Activated naive CD4-positive, alpha-beta T cell treated with anti-CD3 and anti-CD28 coated beads for 36 hours (primary cell): ENCODE measurements at regions of chr17 and their contacts with region 1.

Region 1: GRCh38 chr17:39636927-39637736 is at the start of gene STARD3:
- DNase-seq: peak; percentile 94
- H3K4me3 Mint-ChIP-seq: peak within 1 kb of the TSS; percentile 92
- H3K27ac Mint-ChIP-seq: peak within 1 kb of the TSS; percentile 93
- H3K4me1 Mint-ChIP-seq: peaks cover 49% of the 10 kb centered on the region
- H3K27me3 Mint-ChIP-seq: no peaks in the 10 kb centered on the region
- total RNA-seq, gene STARD3: 56.1 to 56.8 TPM

Region 2: DNA sequence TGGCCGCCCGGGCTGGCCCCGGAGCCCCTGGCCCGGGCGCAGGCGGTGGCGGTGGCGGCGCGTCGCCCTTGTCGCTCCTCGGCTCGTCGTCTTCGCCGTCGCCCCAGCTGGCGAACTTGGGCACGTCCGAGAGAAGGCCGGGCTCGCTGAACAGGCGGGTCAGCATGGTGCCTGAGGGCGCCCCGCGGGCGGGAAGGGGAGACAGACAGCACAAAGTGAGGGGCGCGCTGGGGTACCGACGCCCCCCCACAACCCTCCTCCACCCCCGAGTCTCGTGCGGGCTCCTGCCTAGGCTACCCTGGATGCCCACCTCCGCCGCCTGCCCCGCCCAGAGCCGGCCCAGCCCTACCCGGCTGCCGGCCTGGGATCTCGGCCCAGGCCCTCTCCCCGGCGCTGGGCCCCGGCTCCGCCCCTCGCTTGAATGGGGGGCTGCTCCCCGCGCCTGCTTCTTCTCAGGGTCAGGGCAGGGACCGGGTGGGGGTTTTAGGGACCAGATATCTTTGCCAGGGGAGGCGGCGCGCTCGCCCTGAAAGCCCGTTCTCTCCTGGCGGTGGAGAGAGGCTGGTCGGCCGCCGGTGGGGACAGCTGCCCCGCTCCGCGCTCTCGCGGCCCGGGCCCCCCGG is 30.6 kb before region 1 on chr17:
- CTCF ChIA-PET with region 1: no interaction called
- intact Hi-C with region 1: no loop called
- DNase-seq: no peak
- H3K4me3 Mint-ChIP-seq: no peak overlapping the region
- H3K27ac Mint-ChIP-seq: no peak overlapping the region
- H3K4me1 Mint-ChIP-seq: peaks cover 19% of the 10 kb centered on the region
- H3K27me3 Mint-ChIP-seq: peaks cover 61% of the 10 kb centered on the region

Region 3: DNA sequence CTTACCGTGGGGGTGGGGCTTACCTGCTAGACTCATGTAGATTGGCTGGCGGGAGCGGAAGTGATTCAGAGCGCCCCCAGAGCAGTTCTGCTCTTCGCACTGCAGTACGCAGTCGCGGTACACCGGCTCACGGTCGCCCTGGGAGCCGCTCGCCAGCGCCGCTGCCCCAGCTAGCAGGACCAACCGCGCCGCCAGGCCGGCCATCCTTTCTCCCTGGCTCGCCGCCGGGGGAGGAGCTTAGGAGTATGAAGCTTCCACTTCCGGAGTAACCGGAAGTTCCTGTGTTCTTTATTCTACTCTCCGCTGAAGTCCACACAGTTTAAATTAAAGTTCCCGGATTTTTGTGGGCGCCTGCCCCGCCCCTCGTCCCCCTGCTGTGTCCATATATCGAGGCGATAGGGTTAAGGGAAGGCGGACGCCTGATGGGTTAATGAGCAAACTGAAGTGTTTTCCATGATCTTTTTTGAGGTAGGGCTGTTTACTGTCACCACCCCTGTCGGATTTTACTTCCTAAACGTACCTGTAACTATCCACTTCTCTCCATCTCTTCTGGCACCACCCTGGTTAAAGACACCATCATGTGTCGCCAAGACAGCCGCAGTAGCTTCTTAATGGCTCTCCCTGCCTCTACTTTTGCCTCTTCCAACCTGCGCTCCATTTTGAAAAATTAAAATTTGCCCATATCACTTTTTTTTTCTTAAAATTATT is 50.8 kb after region 1 on chr17 and contains the start of gene PGAP3:
- CTCF ChIA-PET with region 1: interaction called, 3 read pairs
- intact Hi-C with region 1: loop called (anchors 5 kb)
- DNase-seq: peak; percentile 89
- H3K4me3 Mint-ChIP-seq: peak within 1 kb of the TSS; percentile 98
- H3K27ac Mint-ChIP-seq: peak within 1 kb of the TSS; percentile 94
- H3K4me1 Mint-ChIP-seq: peaks cover 15% of the 10 kb centered on the region
- H3K27me3 Mint-ChIP-seq: no peaks in the 10 kb centered on the region
- total RNA-seq, gene PGAP3: 11.8 to 11.9 TPM

Region 4: DNA sequence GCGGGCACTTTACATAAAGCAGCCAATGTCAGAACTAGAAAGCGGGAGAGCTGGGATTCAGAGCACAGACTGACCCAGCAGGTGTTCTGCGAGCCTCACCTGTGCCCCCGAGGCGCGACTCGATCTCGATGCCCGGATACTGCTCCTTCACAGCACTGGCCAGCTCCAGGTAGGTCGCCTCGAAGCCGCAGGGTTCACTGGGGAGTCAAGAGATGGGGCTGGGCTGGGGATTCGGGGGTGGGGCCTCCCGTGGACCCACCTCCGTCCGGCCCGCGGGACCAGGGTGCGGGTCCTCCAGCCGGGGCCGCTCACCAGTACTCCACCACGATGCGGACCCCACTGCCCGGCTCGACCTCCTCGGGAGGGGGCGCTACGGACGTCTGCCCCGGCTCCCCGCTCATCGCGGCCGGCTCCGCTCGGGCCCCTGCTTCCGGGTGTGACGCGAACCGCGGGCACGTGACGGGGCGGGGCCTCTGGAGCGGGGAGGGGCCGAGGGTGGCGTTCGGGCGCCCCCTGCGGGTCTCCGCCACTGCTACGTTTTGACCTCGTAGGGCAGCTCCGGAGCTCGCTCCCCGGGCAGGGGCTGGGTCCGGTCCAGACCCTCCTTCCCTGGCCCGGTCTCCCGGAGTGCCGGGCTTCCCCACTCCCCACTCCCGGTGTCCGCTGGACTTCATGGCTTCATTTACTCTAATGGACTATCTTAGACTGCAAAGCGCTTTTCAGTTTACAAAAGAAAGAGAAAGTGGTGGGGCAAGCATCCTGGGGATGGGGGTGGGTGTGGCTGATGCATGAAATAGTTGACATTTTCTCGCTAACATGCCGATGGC is 93.2 kb after region 1 on chr17 and contains the start of gene MIEN1:
- CTCF ChIA-PET with region 1: interaction called, 7 read pairs
- intact Hi-C with region 1: loop called (anchors 5 kb)
- DNase-seq: peak; percentile 95
- H3K4me3 Mint-ChIP-seq: peak within 1 kb of the TSS; percentile 87
- H3K27ac Mint-ChIP-seq: peak within 1 kb of the TSS; percentile 84
- H3K4me1 Mint-ChIP-seq: peaks cover 14% of the 10 kb centered on the region
- H3K27me3 Mint-ChIP-seq: no peaks in the 10 kb centered on the region
- total RNA-seq, gene MIEN1: 35.2 to 36.5 TPM